ENCODE measurements at regions of chr6 and their contacts with region 1.

Region 1: GRCh38 chr6:32971581-32972352 is 3.4 kb downstream of the BRD2 start:
- DNase-seq: peak; percentile 99
- ATAC-seq: peak; percentile 49
- H3K4me3 Mint-ChIP-seq: peak overlapping the region; percentile 89
- H3K27ac Mint-ChIP-seq: peak overlapping the region; percentile 94
- H3K4me1 Mint-ChIP-seq: peaks cover 30% of the 10 kb centered on the region
- H3K27me3 Mint-ChIP-seq: no peaks in the 10 kb centered on the region

Region 2: GRCh38 chr6:32838114-32838958 is 133.4 kb before region 1 on chr6 and contains the start of gene TAP2:
- POLR2A ChIA-PET with region 1: interaction called, 323 read pairs
- DNase-seq: peak; percentile 100
- ATAC-seq: peak; percentile 79
- H3K4me3 Mint-ChIP-seq: peak within 1 kb of the TSS; percentile 72
- H3K27ac Mint-ChIP-seq: peak within 1 kb of the TSS; percentile 100
- H3K4me1 Mint-ChIP-seq: peaks cover 75% of the 10 kb centered on the region
- H3K27me3 Mint-ChIP-seq: no peaks in the 10 kb centered on the region
- total RNA-seq, gene TAP2: 209 to 210 TPM

Region 3: DNA sequence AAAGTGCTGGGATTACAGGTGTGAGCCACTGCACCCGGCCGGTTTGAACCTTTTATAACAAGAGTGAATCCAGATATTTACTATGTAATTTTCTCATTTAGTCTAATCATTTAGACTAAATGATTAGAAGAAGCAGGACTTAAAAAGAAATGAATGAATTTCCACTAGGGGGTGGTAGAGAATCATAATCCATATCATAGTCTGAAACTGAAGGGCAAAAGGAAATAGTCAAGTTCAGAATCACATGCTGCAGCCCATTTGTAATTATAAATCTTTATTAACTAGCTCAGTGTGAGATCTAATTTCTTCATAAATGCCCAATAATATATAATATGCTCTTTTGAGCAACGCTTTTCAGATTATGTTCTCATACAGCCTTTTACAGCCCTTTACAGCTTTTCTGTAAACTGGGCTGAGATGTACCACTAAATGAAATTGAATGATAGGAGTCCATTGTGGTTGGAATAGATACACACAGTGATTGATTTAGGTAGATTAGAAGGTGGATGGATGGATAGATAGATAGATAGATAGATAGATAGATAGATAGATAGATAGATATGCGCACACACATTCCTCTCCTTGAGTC is 86.0 kb before region 1 on chr6:
- POLR2A ChIA-PET with region 1: interaction called, 11 read pairs
- DNase-seq: no peak
- ATAC-seq: no peak
- H3K4me3 Mint-ChIP-seq: no peak overlapping the region
- H3K27ac Mint-ChIP-seq: no peak overlapping the region
- H3K4me1 Mint-ChIP-seq: peaks cover 5% of the 10 kb centered on the region
- H3K27me3 Mint-ChIP-seq: peaks cover 12% of the 10 kb centered on the region

Region 4: GRCh38 chr6:32940656-32941213 is 31.0 kb before region 1 on chr6 and contains the start of gene HLA-DMB:
- POLR2A ChIA-PET with region 1: interaction called, 247 read pairs
- DNase-seq: peak; percentile 52
- ATAC-seq: peak; percentile 72
- H3K4me3 Mint-ChIP-seq: peak within 1 kb of the TSS; percentile 90
- H3K27ac Mint-ChIP-seq: peak within 1 kb of the TSS; percentile 95
- H3K4me1 Mint-ChIP-seq: peaks cover 69% of the 10 kb centered on the region
- H3K27me3 Mint-ChIP-seq: no peaks in the 10 kb centered on the region
- total RNA-seq, gene HLA-DMB: 14.0 to 14.7 TPM

Region 5: GRCh38 chr6:32984605-32985389 is 13.0 kb after region 1 on chr6:
- POLR2A ChIA-PET with region 1: interaction called, 84 read pairs
- DNase-seq: peak; percentile 87
- ATAC-seq: peak; percentile 77
- H3K4me3 Mint-ChIP-seq: no peak overlapping the region
- H3K27ac Mint-ChIP-seq: peak overlapping the region; percentile 68
- H3K4me1 Mint-ChIP-seq: peaks cover 35% of the 10 kb centered on the region
- H3K27me3 Mint-ChIP-seq: no peaks in the 10 kb centered on the region

Region 6: DNA sequence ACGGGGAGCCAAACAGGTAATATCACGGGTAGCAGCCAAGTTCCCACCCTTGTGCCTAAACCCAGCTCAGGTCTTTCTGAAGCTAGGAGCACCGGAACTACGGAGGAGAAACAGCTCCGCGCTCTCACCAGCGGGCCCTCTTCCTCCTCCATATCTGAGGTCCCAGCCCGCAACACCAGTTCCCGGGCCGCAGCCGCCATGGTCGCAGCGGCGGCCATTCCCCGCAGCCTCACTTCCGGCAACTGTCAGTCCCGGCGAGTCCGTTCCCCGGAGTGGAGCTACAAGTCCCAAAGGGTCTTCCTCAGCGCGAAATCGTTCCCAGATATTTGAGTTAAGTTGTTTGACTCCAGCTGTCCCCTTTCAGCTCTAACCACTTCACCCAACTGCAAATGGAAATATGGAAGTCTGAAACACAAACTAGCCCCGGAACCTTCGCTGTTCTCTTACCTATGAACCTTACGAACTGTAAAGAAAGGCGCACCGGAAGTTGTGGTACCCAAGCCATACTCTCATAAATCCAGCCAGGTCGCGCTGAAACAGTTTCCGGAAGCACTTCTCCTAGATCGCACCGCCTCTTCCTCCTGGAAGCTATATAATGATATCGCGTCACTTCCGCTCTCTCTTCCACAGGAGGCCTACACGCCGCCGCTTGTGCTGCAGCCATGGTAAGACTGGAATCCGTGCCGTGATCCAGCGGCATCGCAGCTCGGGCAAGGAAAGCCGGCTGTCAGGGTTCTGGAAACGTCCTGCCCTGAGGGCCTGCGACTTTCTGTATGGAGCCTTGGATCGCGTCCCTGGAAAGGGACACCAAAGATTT is 299.9 kb after region 1 on chr6 and contains the starts of genes RPS18 and VPS52:
- POLR2A ChIA-PET with region 1: interaction called, 10 read pairs
- DNase-seq: peak; percentile 87
- ATAC-seq: peak; percentile 91
- H3K4me3 Mint-ChIP-seq: peak within 1 kb of the TSS; percentile 94
- H3K27ac Mint-ChIP-seq: peak within 1 kb of the TSS; percentile 99
- H3K4me1 Mint-ChIP-seq: peaks cover 43% of the 10 kb centered on the region
- H3K27me3 Mint-ChIP-seq: no peaks in the 10 kb centered on the region
- total RNA-seq, gene RPS18: 3,300 to 3,409 TPM
- total RNA-seq, gene VPS52: 72.3 to 76.0 TPM